Panc1 (cell line): ENCODE measurements at regions of chr3 and their contacts with region 1.

Region 1: DNA sequence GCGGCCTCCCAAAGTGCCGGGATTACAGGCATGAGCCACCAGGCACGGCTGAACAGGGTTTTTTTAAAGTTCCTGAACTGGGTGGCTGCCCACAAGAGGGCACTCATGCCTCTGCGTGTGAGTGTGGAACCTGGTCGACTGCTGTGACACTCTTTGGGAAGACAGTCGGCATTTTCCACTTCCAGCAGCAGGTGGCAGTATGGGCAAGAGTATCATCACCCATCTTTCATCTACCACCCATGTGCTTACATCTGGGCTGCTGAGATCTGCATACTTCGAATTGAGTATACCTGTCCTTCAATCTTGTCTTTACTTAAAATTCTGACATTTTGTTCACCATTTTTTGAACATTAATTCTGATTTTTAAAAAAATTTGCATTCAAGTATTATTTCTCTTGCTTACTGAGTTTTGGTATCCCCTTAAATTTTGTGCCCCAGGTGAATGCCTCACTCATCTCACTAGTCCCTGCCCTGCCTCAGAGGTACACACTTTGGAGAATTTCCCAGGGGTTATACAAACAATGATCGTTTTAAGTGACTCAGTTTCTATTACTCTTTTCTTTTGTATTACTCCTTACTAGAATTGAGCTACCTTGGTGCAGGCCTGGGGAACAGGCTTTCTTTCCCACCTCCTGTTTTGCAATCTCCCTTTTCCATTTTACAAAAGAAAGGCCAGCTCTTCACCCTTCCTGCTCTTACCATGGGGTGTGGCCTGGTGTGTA is 11.8 kb downstream of the CLEC3B start:
- DNase-seq: peak; percentile 90
- ATAC-seq: peak; percentile 93
- H3K4me3 ChIP-seq: peak overlapping the region; percentile 12 to 27; a peak in 2 of 4 replicates
- H3K27ac ChIP-seq: no peak overlapping the region
- H3K4me1 ChIP-seq: no peaks in the 10 kb centered on the region
- H3K27me3 ChIP-seq: no peaks in the 10 kb centered on the region
- CTCF ChIP-seq: peak; percentile 96

Region 2: GRCh38 chr3:45062697-45063070 is 24.8 kb after region 1 on chr3:
- CTCF ChIA-PET with region 1: interaction called, 10 read pairs
- POLR2A ChIA-PET with region 1: no interaction called
- in situ Hi-C with region 1: no loop called
- intact Hi-C with region 1: no loop called
- DNase-seq: no peak
- ATAC-seq: no peak
- H3K4me3 ChIP-seq: no peak overlapping the region
- H3K27ac ChIP-seq: no peak overlapping the region
- H3K4me1 ChIP-seq: no peaks in the 10 kb centered on the region; the same call in 1 of the 2 replicates
- H3K27me3 ChIP-seq: no peaks in the 10 kb centered on the region
- CTCF ChIP-seq: no peak

Region 3: GRCh38 chr3:45210308-45211041 is 172.6 kb after region 1 on chr3:
- CTCF ChIA-PET with region 1: interaction called, 13 read pairs
- POLR2A ChIA-PET with region 1: no interaction called
- in situ Hi-C with region 1: no loop called
- intact Hi-C with region 1: loop called (anchors 1 kb)
- DNase-seq: no peak
- ATAC-seq: peak; percentile 97
- H3K4me3 ChIP-seq: no peak overlapping the region
- H3K27ac ChIP-seq: no peak overlapping the region
- H3K4me1 ChIP-seq: no peaks in the 10 kb centered on the region; the same call in 1 of the 2 replicates
- H3K27me3 ChIP-seq: no peaks in the 10 kb centered on the region
- CTCF ChIP-seq: peak; percentile 85

Region 4: DNA sequence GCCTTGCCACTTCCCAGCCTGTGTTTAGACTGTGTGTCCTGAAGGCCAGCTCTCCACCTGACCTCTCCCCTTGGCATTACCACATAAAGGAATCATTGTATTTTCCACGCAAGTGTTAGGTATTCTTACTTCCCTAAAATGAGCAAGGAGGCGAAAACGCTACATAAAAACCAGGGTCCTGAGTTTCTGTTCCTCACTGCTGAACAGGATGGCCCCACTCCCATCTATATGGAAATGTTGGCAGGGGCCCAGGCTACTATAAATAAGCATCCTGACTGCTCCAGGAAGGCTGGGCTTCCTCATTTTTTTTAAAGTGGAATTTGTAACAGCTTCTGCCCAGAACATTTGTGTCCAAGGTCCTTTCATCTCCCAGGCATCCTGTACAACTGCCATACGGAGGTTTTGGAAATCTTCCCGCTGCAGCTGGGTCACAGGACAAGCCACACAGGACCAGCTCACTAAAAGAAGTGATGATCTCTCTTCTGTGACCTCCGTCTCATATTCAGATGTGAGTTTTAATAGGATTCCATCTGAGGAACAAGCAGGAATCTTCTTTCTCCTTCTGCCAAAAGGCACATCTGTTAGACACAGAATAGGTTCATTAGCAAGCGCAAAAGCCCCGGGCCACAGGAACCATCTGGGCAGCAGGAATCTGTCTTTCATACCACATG is 500.2 kb after region 1 on chr3:
- CTCF ChIA-PET with region 1: no interaction called
- POLR2A ChIA-PET with region 1: no interaction called
- in situ Hi-C with region 1: no loop called
- intact Hi-C with region 1: no loop called
- DNase-seq: no peak
- ATAC-seq: no peak
- H3K4me3 ChIP-seq: no peak overlapping the region
- H3K27ac ChIP-seq: no peak overlapping the region
- H3K4me1 ChIP-seq: no peaks in the 10 kb centered on the region
- H3K27me3 ChIP-seq: no peaks in the 10 kb centered on the region
- CTCF ChIP-seq: no peak